ENCODE measurements at regions of chr17 and their contacts with region 1.

Region 1: DNA sequence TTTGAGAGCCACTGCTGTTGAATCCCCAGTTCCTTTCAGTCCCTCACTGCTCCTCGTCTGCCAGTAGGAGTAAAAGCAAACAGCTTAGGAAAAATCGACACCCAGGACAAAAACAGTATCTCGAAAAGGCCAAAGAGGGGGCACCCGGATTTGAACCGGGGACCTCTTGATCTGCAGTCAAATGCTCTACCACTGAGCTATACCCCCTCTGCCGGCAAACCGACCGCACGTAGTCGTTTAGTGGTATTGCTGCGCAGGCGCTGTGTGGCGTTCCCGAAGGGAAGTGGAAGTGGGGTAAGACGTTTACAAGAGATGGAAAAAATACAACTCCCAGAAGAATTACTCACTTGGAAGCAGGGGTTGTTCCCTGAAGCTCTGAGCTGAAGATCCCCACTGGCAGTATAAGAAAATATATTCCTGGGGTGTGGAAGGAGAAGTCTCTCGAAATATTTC is 2.2 kb upstream of the PLXDC1 start:
- DNase-seq: peak; percentile 81 to 96 (median 90)
- ATAC-seq: peak; percentile 77 to 91 (median 84)
- H3K4me3 ChIP-seq: peak overlapping the region; percentile 11 to 61 (median 54)
- H3K27ac ChIP-seq: peak overlapping the region; percentile 39 to 85 (median 55)
- H3K4me1 ChIP-seq: peaks cover 0 to 4% (median 0%) of the 10 kb centered on the region in 3 donors
- H3K27me3 ChIP-seq: no peaks in the 10 kb centered on the region
- CTCF ChIP-seq: no peak

Region 2: GRCh38 chr17:38982858-38983746 is 170.5 kb before region 1 on chr17:
- intact Hi-C with region 1: loop called in 1 of 3 experiments (anchors 5 kb)
- DNase-seq: peak in 2 of 6 donors; percentile 23 to 53
- ATAC-seq: peak; percentile 60 to 89 (median 87)
- H3K4me3 ChIP-seq: no peak overlapping the region
- H3K27ac ChIP-seq: no peak overlapping the region
- H3K4me1 ChIP-seq: no peaks in the 10 kb centered on the region
- H3K27me3 ChIP-seq: no peaks in the 10 kb centered on the region
- CTCF ChIP-seq: peak; percentile 25 to 57 (median 55)

Region 3: GRCh38 chr17:39027455-39028035 is 126.1 kb before region 1 on chr17:
- intact Hi-C with region 1: no loop called
- DNase-seq: peak in 1 of 6 donors; percentile 58
- ATAC-seq: peak; percentile 44 to 59 (median 50)
- H3K4me3 ChIP-seq: peak overlapping the region; percentile 10 to 47 (median 28)
- H3K27ac ChIP-seq: no peak overlapping the region
- H3K4me1 ChIP-seq: no peaks in the 10 kb centered on the region
- H3K27me3 ChIP-seq: no peaks in the 10 kb centered on the region
- CTCF ChIP-seq: no peak

Region 4: DNA sequence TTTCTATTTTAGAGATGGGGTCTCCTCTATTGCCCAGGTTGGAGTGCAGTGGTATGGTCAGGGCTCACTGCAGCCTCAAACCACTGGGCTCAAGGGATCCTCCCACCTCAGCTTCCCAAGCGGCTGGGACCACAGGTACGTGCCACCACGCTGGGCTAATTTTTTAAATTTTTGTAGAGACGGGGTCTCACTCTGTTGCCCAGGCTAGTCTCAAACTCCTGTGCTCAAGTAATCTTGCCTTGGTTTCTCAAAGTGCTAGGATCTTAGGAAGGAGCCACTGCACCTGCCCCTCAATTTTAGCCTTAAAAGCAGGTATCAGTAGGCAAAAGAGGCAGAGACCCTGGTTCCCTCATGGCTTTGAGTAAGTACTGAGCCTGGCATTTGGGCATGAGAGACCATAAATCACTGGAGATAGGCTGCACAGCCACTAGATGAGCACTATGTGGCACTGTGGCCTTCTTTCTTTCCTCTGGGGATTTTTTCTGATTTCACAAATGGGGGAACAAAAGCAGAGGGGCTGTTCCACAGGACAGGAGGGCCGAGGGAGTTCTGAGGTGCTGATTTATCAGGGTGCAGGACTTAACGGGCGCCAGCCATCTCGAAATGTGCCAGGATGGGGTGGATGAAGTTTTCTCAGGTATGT is 84.4 kb before region 1 on chr17:
- intact Hi-C with region 1: loop called in 1 of 3 experiments (anchors 10 kb)
- DNase-seq: peak in 2 of 6 donors; percentile 13 to 32
- ATAC-seq: peak; percentile 67 to 88 (median 84)
- H3K4me3 ChIP-seq: no peak overlapping the region
- H3K27ac ChIP-seq: no peak overlapping the region
- H3K4me1 ChIP-seq: no peaks in the 10 kb centered on the region
- H3K27me3 ChIP-seq: no peaks in the 10 kb centered on the region
- CTCF ChIP-seq: peak in 3 of 4 donors; percentile 37 to 60 (median 47)